ENCODE measurements at regions of chr1 and their contacts with region 1.

Region 1: GRCh38 chr1:67570473-67571143 is 114.4 kb upstream of the GADD45A start:
- DNase-seq: no peak
- ATAC-seq: peak; percentile 22 to 57 (median 33)
- H3K4me3 ChIP-seq: no peak overlapping the region
- H3K27ac ChIP-seq: peak overlapping the region; percentile 93
- H3K4me1 ChIP-seq: peaks cover 43% of the 10 kb centered on the region
- H3K27me3 ChIP-seq: no peaks in the 10 kb centered on the region
- CTCF ChIP-seq: no peak

Region 2: GRCh38 chr1:67552336-67552759 is 18.3 kb before region 1 on chr1:
- intact Hi-C with region 1: no loop called
- DNase-seq: no peak
- ATAC-seq: peak in 1 of 4 donors; percentile 30
- H3K4me3 ChIP-seq: no peak overlapping the region
- H3K27ac ChIP-seq: no peak overlapping the region
- H3K4me1 ChIP-seq: peaks cover 7% of the 10 kb centered on the region
- H3K27me3 ChIP-seq: no peaks in the 10 kb centered on the region
- CTCF ChIP-seq: no peak

Region 3: DNA sequence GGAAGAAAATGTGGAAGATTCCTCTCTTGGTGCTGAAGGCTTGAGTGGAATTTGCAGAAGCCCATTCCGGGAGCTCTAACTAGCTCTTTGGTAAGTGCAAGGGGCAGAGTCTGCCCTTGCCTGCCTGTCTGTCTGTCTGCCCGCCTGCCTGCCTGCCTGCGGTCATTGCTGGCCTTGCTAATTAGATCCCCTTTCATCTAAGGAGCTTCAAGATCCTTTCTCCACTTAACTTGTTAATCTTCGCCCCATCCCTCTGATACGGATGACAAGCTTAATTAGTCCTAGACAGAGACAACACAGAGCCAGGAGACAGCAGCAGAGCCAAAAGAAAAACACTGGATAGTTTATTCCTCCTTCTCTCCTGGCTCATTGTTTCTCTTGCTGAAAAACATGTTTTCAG is 34.2 kb after region 1 on chr1:
- intact Hi-C with region 1: no loop called
- DNase-seq: no peak
- ATAC-seq: no peak
- H3K4me3 ChIP-seq: no peak overlapping the region
- H3K27ac ChIP-seq: no peak overlapping the region
- H3K4me1 ChIP-seq: no peaks in the 10 kb centered on the region
- H3K27me3 ChIP-seq: no peaks in the 10 kb centered on the region
- CTCF ChIP-seq: no peak

Region 4: GRCh38 chr1:67618285-67619018 is 47.8 kb after region 1 on chr1:
- intact Hi-C with region 1: loop called in 1 of 2 experiments (anchors 1 kb)
- DNase-seq: peak; percentile 62 to 63
- ATAC-seq: peak; percentile 79 to 87 (median 84)
- H3K4me3 ChIP-seq: peak overlapping the region; percentile 20
- H3K27ac ChIP-seq: peak overlapping the region; percentile 78
- H3K4me1 ChIP-seq: peaks cover 27% of the 10 kb centered on the region
- H3K27me3 ChIP-seq: no peaks in the 10 kb centered on the region
- CTCF ChIP-seq: no peak

Region 5: GRCh38 chr1:67646145-67647035 is 75.8 kb after region 1 on chr1:
- intact Hi-C with region 1: loop called in 1 of 2 experiments (anchors 10 kb)
- DNase-seq: peak; percentile 21 to 59
- ATAC-seq: peak; percentile 35 to 61 (median 52)
- H3K4me3 ChIP-seq: no peak overlapping the region
- H3K27ac ChIP-seq: peak overlapping the region; percentile 73
- H3K4me1 ChIP-seq: peaks cover 26% of the 10 kb centered on the region
- H3K27me3 ChIP-seq: no peaks in the 10 kb centered on the region
- CTCF ChIP-seq: no peak

Region 6: DNA sequence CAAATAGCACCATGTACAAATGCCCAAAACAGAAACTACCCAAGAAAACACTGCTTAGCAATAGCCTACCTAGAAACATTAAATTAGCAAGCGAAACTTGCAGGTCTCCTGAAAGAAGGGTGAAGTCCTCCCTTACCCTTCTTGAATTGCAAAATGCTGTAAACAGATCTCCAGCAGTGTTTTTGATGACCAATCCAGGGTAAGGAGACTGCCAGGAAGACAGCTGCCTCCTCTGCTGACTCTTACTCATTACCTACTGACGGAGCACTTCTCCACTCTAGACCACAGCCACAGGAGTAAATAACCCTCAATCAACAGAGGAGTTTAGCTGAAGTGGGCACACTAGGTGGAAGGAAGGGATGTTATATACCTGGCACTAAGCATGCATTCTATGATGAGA is 82.2 kb after region 1 on chr1:
- intact Hi-C with region 1: loop called (anchors 2 to 10 kb)
- DNase-seq: peak; percentile 30 to 59
- ATAC-seq: peak; percentile 98 to 99 (median 99)
- H3K4me3 ChIP-seq: peak overlapping the region; percentile 57
- H3K27ac ChIP-seq: peak overlapping the region; percentile 88
- H3K4me1 ChIP-seq: peaks cover 14% of the 10 kb centered on the region
- H3K27me3 ChIP-seq: no peaks in the 10 kb centered on the region
- CTCF ChIP-seq: no peak

Region 7: GRCh38 chr1:68481041-68481440 is 910.4 kb after region 1 on chr1:
- intact Hi-C with region 1: no loop called
- DNase-seq: no peak
- ATAC-seq: no peak
- H3K4me3 ChIP-seq: no peak overlapping the region
- H3K27ac ChIP-seq: no peak overlapping the region
- H3K4me1 ChIP-seq: no peaks in the 10 kb centered on the region
- H3K27me3 ChIP-seq: no peaks in the 10 kb centered on the region
- CTCF ChIP-seq: no peak